ENCODE measurements at regions of chr1 and their contacts with region 1.

Region 1: GRCh38 chr1:21956720-21957552 is 19.8 kb upstream of the HSPG2 start:
- DNase-seq: peak; percentile 14 to 86 (median 49)
- ATAC-seq: peak; percentile 91
- H3K4me3 ChIP-seq: peak overlapping the region; percentile 19 to 51
- H3K4me3 Mint-ChIP-seq: peak overlapping the region; percentile 73
- H3K27ac ChIP-seq: peak overlapping the region; percentile 6 to 17
- H3K27ac Mint-ChIP-seq: peak overlapping the region; percentile 91
- H3K4me1 ChIP-seq: peaks cover 32% of the 10 kb centered on the region
- H3K4me1 Mint-ChIP-seq: peaks cover 33% of the 10 kb centered on the region
- H3K27me3 ChIP-seq: no peaks in the 10 kb centered on the region
- H3K27me3 Mint-ChIP-seq: no peaks in the 10 kb centered on the region
- CTCF ChIP-seq: no peak

Region 2: DNA sequence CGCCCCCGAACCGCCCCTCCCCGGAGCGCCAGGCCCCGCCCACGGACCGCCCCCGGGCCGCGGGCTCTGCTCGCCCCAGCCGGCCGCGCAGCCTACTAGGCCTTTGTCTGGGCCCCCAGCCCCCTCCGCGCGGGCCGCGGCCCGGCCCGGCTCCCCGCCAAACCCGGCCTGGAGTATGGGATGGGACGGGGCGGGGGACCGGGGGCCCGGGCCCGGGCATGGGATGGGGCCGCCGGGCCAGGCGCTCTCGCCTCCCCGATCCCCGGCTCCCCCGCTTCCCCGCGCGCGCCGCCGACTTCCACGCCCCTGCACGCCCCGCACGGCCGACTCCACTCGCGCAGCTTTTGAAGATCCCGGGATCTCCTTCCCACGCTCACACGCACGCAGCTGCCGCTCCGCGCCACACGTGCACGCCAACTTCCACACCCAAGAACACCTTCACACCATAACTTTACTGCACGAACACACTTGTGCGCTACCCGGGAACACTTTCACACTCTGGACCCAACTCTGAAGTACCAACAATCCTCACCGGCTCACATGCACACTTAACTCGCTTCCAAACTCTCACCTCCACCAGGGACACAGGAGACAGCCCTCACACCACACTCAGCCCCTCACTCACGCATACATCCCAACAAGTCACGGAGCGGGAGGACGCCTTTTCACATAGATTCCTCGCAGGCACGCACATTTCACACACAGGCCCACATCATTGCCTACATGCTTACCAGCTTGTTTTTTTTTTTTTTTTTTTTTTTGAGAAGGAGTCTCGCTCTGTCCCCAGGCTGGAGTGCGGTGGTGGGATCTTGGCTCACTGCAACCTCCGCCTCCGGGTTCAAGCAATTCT is 19.3 kb before region 1 on chr1:
- CTCF ChIA-PET with region 1: interaction called, 3 read pairs
- POLR2A ChIA-PET with region 1: no interaction called
- intact Hi-C with region 1: loop called in 1 of 2 experiments (anchors 2 kb)
- DNase-seq: peak; percentile 37 to 80 (median 62)
- ATAC-seq: peak; percentile 89
- H3K4me3 ChIP-seq: peak overlapping the region; percentile 14 to 43
- H3K4me3 Mint-ChIP-seq: peak overlapping the region; percentile 91
- H3K27ac ChIP-seq: no peak overlapping the region
- H3K27ac Mint-ChIP-seq: peak overlapping the region; percentile 84
- H3K4me1 ChIP-seq: peaks cover 15% of the 10 kb centered on the region
- H3K4me1 Mint-ChIP-seq: peaks cover 27% of the 10 kb centered on the region
- H3K27me3 ChIP-seq: peaks cover 0 to 2% of the 10 kb centered on the region in 2 experiments
- H3K27me3 Mint-ChIP-seq: peaks cover 13% of the 10 kb centered on the region
- CTCF ChIP-seq: no peak

Measured in CD8-positive, alpha-beta T cell (primary cell).